ENCODE measurements at regions of chr15 and their contacts with region 1.

Region 1: GRCh38 chr15:22968366-22968765 is 11.8 kb downstream of the CYFIP1 start:
- DNase-seq: no peak
- ATAC-seq: peak; percentile 44 to 58
- H3K4me3 ChIP-seq: no peak overlapping the region
- H3K27ac ChIP-seq: no peak overlapping the region
- H3K4me1 ChIP-seq: peaks cover 12 to 13% of the 10 kb centered on the region in 2 donors
- H3K27me3 ChIP-seq: no peaks in the 10 kb centered on the region
- CTCF ChIP-seq: no peak
- POLR2A ChIP-seq: no peak

Region 2: DNA sequence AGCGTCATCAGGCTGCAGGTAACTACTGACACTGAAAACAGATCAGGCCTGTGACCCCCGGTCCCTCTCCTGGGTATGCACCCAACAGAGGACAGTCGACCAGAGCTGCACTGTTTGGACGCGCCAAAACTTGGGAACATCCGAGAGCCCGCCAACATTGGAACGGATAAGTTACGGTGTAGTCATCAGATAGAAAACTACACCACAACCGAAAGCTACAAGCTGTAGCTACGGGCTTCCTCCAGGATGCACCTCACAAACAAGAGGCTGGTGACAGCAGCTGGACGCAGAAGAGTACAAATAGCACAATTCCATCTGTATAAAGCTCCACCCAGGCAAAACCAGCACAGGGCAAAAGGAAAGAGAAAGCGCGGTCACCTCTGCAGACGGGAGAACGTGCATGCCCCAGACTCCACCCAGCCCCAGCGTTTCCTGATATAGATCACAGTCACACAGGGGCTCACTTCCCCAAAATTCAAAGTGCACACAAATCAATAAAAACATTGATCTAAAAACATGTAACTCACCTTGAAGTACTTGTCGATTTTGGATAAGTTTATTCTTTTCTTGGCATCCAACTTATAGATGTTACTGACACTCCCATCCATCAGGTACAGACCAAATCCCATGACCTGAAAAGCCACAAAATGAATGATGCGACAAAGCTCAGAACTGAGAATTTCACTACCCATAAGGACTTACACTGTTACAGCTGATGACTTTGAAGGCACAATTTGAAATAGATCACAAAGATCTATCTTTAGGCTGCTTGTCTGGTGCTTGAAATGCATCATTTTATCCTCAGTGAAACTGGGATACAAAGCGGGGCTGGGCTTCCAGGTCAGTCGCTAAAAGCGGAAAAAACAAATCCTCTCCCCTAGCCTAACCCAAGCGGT is 31.5 kb before region 1 on chr15:
- in situ Hi-C with region 1: no loop called
- intact Hi-C with region 1: loop called (anchors 1 kb)
- DNase-seq: no peak
- ATAC-seq: no peak
- H3K4me3 ChIP-seq: no peak overlapping the region
- H3K27ac ChIP-seq: no peak overlapping the region
- H3K4me1 ChIP-seq: no peaks in the 10 kb centered on the region
- H3K27me3 ChIP-seq: no peaks in the 10 kb centered on the region
- CTCF ChIP-seq: no peak
- POLR2A ChIP-seq: no peak

Region 3: DNA sequence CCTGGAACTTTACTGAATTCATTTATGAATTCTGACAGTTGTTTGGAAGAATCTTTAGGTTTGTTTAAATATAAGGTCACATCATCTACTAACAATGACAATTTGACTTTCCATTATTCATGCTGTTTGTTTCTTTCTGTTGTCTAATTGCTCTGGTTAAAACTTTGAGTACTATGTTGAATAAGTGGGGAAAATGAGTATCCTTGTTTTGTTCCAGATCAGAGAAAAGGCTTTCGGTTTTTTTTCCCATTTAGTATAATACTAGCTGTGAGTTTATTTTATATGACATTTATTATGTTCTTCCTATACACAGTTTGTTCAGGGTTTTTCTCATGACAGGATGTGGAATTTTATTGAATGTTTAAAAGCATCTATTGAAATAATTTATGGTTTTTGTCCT is 82.3 kb after region 1 on chr15:
- in situ Hi-C with region 1: no loop called
- intact Hi-C with region 1: no loop called
- DNase-seq: no peak
- ATAC-seq: no peak
- H3K4me3 ChIP-seq: no peak overlapping the region
- H3K27ac ChIP-seq: no peak overlapping the region
- H3K4me1 ChIP-seq: no peaks in the 10 kb centered on the region
- H3K27me3 ChIP-seq: no peaks in the 10 kb centered on the region
- CTCF ChIP-seq: no peak
- POLR2A ChIP-seq: no peak

Measured in gastrocnemius medialis (tissue), 4 donors.